GM12878 (cell line): ENCODE measurements at regions of chr16 and their contacts with region 1.

Region 1: DNA sequence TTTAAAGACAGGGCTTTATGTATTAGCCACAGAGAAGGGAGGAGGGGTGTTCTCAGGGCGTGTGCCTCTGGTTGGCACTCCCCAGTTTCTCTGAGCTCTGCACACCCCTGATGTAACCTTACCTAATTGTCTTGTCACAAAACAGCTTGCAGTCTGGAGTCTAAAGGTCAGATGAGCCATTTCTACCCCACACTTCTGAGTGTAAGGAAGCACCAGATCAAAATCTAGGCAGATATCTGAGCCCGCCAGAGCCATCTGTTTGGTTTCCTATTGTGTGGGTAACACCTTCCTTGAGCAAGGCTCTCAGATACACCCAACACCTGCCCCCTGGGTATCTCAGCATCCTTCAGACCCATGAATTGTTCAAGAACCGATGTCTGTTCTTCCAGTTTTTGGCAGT is 15.5 kb downstream of the CDH1 start:
- DNase-seq: no peak
- ATAC-seq: peak; percentile 53
- H3K4me3 ChIP-seq: no peak overlapping the region
- H3K27ac ChIP-seq: no peak overlapping the region
- H3K4me1 ChIP-seq: peaks cover 30% of the 10 kb centered on the region
- H3K27me3 ChIP-seq: no peaks in the 10 kb centered on the region
- CTCF ChIP-seq: no peak
- EP300 ChIP-seq: peak; percentile 20 to 24; a peak in 2 of 4 replicates
- POLR2A ChIP-seq: no peak
- RAD21 ChIP-seq: no peak

Region 2: DNA sequence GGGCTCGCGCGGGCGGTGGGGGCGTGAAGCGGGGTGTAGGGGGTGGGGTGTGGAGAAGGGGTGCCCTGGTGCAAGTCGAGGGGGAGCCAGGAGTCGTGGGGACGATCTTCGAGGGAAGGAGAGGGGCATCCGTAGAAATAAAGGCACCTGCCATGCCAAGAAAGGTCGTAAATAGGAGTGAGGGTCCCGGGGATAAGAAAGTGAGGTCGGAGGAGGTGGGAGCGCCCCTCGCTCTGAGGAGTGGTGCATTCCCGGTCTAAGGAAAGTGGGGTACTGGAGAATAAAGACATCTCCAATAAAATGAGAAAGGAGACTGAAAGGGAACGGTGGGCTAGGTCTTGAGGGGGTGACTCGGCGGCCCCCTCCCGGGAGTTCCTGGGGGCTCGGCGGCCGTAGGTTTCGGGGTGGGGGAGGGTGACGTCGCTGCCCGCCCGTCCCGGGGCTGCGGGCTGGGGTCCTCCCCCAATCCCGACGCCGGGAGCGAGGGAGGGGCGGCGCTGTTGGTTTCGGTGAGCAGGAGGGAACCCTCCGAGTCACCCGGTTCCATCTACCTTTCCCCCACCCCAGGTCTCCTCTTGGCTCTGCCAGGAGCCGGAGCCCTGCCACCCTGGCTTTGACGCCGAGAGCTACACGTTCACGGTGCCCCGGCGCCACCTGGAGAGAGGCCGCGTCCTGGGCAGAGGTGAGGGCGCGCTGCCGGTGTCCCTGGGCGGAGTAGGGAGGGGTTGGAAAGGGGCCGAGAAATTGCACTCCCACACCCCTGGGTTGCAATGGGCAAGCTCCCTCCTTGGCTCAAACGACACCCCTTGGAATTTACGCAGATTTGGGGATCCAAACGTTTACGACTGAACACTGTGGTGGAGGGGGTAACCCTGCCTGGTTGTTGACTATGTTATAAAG is 14.6 kb before region 1 on chr16:
- CTCF ChIA-PET with region 1: interaction called, 6 read pairs
- POLR2A ChIA-PET with region 1: interaction called, 17 read pairs
- RAD21 ChIA-PET with region 1: interaction called, 19 read pairs
- SMC1A ChIA-PET with region 1: interaction called, 26 read pairs
- in situ Hi-C with region 1: no loop called
- intact Hi-C with region 1: loop called (anchors 1 kb)
- DNase-seq: no peak
- ATAC-seq: no peak
- H3K4me3 ChIP-seq: no peak overlapping the region
- H3K27ac ChIP-seq: no peak overlapping the region
- H3K4me1 ChIP-seq: peaks cover 21% of the 10 kb centered on the region
- H3K27me3 ChIP-seq: no peaks in the 10 kb centered on the region; a peak in 1 of 4 replicates
- CTCF ChIP-seq: no peak
- EP300 ChIP-seq: no peak
- POLR2A ChIP-seq: no peak
- RAD21 ChIP-seq: no peak